Activated CD4-positive, alpha-beta T cell treated with anti-CD3 and anti-CD28 coated beads for 36 hours (primary cell): ENCODE measurements at regions of chr5 and their contacts with region 1.

Region 1: GRCh38 chr5:98773464-98774191 is at the start of gene RGMB:
- DNase-seq: peak; percentile 95
- ATAC-seq: peak; percentile 92
- H3K4me3 Mint-ChIP-seq: peak within 1 kb of the TSS; percentile 88
- H3K27ac Mint-ChIP-seq: peak within 1 kb of the TSS; percentile 77
- H3K4me1 Mint-ChIP-seq: peaks cover 48% of the 10 kb centered on the region
- H3K27me3 Mint-ChIP-seq: peaks cover 26% of the 10 kb centered on the region
- total RNA-seq, gene RGMB: 2.8 to 2.9 TPM

Region 2: GRCh38 chr5:97183100-97183929 is 1590.3 kb before region 1 on chr5 and contains the start of gene RIOK2:
- CTCF ChIA-PET with region 1: interaction called, 3 read pairs
- POLR2A ChIA-PET with region 1: no interaction called
- intact Hi-C with region 1: loop called (anchors 1 to 2 kb)
- DNase-seq: peak; percentile 96
- ATAC-seq: peak; percentile 94
- H3K4me3 Mint-ChIP-seq: peak within 1 kb of the TSS; percentile 82
- H3K27ac Mint-ChIP-seq: peak within 1 kb of the TSS; percentile 100
- H3K4me1 Mint-ChIP-seq: peaks cover 33% of the 10 kb centered on the region
- H3K27me3 Mint-ChIP-seq: no peaks in the 10 kb centered on the region
- total RNA-seq, gene RIOK2: 30.9 to 39.2 TPM

Region 3: DNA sequence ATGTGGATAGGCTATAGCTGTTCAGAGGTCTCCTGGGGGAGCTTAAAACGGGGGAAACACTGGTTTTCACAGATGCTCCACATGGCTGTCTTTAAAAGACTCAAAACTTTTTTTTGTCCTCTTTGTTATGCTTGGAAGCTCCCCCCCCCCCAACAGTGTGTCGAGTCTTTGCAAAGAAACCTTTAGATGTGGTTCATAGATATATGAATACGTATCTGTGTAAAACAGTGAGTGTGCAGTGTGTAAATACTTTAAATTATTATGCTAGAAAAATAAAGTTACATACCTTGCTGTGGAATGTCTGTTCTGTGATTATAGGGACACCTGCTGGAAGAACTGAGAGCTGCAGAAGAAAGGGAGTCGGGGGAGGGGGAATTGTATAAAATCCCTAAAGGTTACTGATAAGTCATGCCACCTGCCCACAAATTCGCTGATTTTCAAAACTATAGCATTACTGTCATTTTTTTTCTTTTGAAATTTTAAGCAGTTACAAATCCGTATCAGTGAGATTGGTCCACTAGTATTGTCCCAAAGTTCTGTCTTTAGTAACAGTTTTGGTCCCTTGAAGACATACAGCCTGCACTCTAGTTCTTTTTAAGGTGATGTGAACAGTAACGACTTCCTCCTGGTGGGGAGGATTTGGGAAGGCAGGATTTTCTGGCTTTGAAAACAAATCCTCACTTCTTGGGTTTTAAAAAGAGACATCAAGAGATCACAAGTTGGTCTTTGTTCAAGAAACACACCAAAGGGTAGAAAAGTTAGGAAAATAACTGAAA is 22.8 kb after region 1 on chr5:
- CTCF ChIA-PET with region 1: interaction called, 38 read pairs
- POLR2A ChIA-PET with region 1: no interaction called
- intact Hi-C with region 1: loop called (anchors 1 kb)
- DNase-seq: peak; percentile 68
- ATAC-seq: peak; percentile 84
- H3K4me3 Mint-ChIP-seq: no peak overlapping the region
- H3K27ac Mint-ChIP-seq: no peak overlapping the region
- H3K4me1 Mint-ChIP-seq: peaks cover 6% of the 10 kb centered on the region
- H3K27me3 Mint-ChIP-seq: no peaks in the 10 kb centered on the region

Region 4: GRCh38 chr5:99032234-99033013 is 258.8 kb after region 1 on chr5:
- CTCF ChIA-PET with region 1: no interaction called
- POLR2A ChIA-PET with region 1: no interaction called
- intact Hi-C with region 1: loop called (anchors 1 to 2 kb)
- DNase-seq: peak; percentile 58
- ATAC-seq: peak; percentile 22
- H3K4me3 Mint-ChIP-seq: peak overlapping the region; percentile 69
- H3K27ac Mint-ChIP-seq: peak overlapping the region; percentile 87
- H3K4me1 Mint-ChIP-seq: peaks cover 69% of the 10 kb centered on the region
- H3K27me3 Mint-ChIP-seq: no peaks in the 10 kb centered on the region